CD4-positive, alpha-beta T cell (primary cell): ENCODE measurements at regions of chr6 and their contacts with region 1.

Region 1: GRCh38 chr6:166999145-166999883 is at the start of gene CEP43:
- DNase-seq: peak; percentile 65 to 93 (median 83)
- ATAC-seq: peak; percentile 87
- H3K4me3 ChIP-seq: peak within 1 kb of the TSS; percentile 98
- H3K4me3 Mint-ChIP-seq: peak within 1 kb of the TSS; percentile 96
- H3K27ac ChIP-seq: peak within 1 kb of the TSS; percentile 14 to 61
- H3K27ac Mint-ChIP-seq: peak within 1 kb of the TSS; percentile 87
- H3K4me1 ChIP-seq: peaks cover 15% of the 10 kb centered on the region
- H3K4me1 Mint-ChIP-seq: peaks cover 29% of the 10 kb centered on the region
- H3K27me3 ChIP-seq: no peaks in the 10 kb centered on the region
- H3K27me3 Mint-ChIP-seq: no peaks in the 10 kb centered on the region
- CTCF ChIP-seq: no peak
- total RNA-seq, gene CEP43: 12.5 to 13.5 TPM

Region 2: GRCh38 chr6:166382933-166383801 is 616.1 kb before region 1 on chr6 and contains the start of gene MPC1:
- CTCF ChIA-PET with region 1: no interaction called
- POLR2A ChIA-PET with region 1: no interaction called
- intact Hi-C with region 1: loop called in 1 of 2 experiments (anchors 5 kb)
- DNase-seq: peak; percentile 82 to 97 (median 92)
- ATAC-seq: peak; percentile 92
- H3K4me3 ChIP-seq: peak within 1 kb of the TSS; percentile 66
- H3K4me3 Mint-ChIP-seq: peak within 1 kb of the TSS; percentile 98
- H3K27ac ChIP-seq: peak within 1 kb of the TSS; percentile 72 to 73
- H3K27ac Mint-ChIP-seq: peak within 1 kb of the TSS; percentile 94
- H3K4me1 ChIP-seq: peaks cover 16% of the 10 kb centered on the region
- H3K4me1 Mint-ChIP-seq: peaks cover 14% of the 10 kb centered on the region
- H3K27me3 ChIP-seq: no peaks in the 10 kb centered on the region
- H3K27me3 Mint-ChIP-seq: no peaks in the 10 kb centered on the region
- CTCF ChIP-seq: no peak
- total RNA-seq, gene MPC1: 17.4 to 19.3 TPM

Region 3: DNA sequence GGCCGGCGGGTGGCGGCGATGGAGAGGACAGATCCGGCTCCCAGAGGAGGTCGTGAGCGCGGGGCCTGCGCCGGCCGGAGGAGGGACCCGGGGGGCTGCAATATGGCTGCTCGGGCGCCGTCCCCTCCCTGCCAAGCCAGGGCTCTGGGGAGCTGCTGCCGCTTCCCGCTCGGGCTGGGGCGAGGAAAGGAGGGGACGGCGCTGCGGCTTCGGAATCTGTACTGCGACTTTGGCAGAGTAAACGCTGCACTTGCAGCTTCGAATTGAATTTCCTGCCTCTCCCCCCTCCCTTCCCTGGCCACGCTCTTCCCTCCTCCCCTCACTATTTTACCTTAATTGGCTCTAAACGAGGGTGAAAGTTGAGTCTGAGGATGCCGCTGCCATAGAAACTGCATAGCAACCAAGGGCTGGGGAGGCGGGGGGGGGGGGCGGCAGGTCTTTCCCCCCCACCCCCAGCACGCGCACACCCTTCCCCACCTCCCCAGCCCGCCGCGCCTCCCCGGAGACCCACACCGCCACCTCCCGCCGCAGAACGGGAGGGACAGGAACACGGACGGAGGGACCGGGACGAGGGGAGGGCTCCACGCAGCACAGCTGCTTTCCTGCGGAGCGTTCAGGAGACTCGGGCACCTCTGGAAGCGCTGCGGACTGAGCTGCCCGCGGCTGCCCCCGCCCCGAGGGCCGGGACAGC is 136.9 kb before region 1 on chr6:
- CTCF ChIA-PET with region 1: no interaction called
- POLR2A ChIA-PET with region 1: no interaction called
- intact Hi-C with region 1: loop called in 1 of 2 experiments (anchors 10 kb)
- DNase-seq: peak; percentile 13 to 80 (median 34)
- ATAC-seq: peak; percentile 87
- H3K4me3 ChIP-seq: peak overlapping the region; percentile 63
- H3K4me3 Mint-ChIP-seq: peak overlapping the region; percentile 94
- H3K27ac ChIP-seq: no peak overlapping the region
- H3K27ac Mint-ChIP-seq: peak overlapping the region; percentile 58
- H3K4me1 ChIP-seq: peaks cover 17% of the 10 kb centered on the region
- H3K4me1 Mint-ChIP-seq: peaks cover 17% of the 10 kb centered on the region
- H3K27me3 ChIP-seq: peaks cover 0 to 3% of the 10 kb centered on the region in 2 experiments
- H3K27me3 Mint-ChIP-seq: no peaks in the 10 kb centered on the region
- CTCF ChIP-seq: peak; percentile 28

Region 4: DNA sequence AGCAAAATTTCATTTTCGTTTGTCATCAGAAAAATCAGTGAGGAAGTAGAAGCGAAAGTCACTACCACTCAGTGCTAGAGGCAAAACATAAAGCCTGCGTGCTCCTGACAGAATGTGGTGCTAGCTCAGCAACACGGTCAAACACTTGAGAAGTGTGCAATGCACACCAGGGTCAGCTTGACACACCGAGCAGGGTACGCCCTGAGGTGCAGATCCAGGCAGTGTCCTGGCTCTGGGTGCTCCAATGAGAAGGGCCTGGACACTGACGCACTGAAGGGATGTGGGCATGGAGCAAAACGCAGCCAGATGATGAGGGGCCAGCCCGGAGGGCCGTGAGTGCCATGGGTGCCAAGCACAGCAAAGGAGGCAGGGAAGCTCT is 48.9 kb before region 1 on chr6:
- CTCF ChIA-PET with region 1: interaction called, 3 read pairs
- POLR2A ChIA-PET with region 1: interaction called, 26 read pairs
- intact Hi-C with region 1: loop called in 1 of 2 experiments (anchors 5 kb)
- DNase-seq: peak in 4 of 14 experiments; percentile 39 to 72 (median 61)
- ATAC-seq: peak; percentile 14
- H3K4me3 ChIP-seq: peak overlapping the region; percentile 34
- H3K4me3 Mint-ChIP-seq: peak overlapping the region; percentile 72
- H3K27ac ChIP-seq: peak overlapping the region; percentile 79 to 88
- H3K27ac Mint-ChIP-seq: peak overlapping the region; percentile 93
- H3K4me1 ChIP-seq: peaks cover 86% of the 10 kb centered on the region
- H3K4me1 Mint-ChIP-seq: peaks cover 63% of the 10 kb centered on the region
- H3K27me3 ChIP-seq: no peaks in the 10 kb centered on the region
- H3K27me3 Mint-ChIP-seq: no peaks in the 10 kb centered on the region
- CTCF ChIP-seq: no peak

Region 5: DNA sequence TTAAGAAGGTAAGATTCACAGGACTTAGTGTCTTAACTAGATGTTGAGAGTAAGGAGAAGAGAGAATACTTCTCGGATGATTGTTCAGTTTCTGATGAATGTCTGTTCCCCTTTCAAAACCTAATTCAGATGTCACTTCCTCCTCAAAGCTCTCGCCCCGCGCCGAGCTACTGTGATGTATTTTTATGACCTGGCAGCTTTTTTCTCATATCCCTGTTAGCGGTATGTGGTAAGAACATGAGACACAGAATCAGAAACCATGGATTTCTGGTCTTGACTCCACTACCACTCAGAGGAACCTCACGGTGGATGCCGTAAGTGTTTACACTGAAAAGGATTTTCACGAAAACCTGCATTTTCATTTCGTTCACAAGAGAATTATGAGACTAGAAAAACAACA is 48.2 kb after region 1 on chr6:
- CTCF ChIA-PET with region 1: interaction called, 6 read pairs
- POLR2A ChIA-PET with region 1: interaction called, 4 read pairs
- intact Hi-C with region 1: loop called (anchors 5 to 10 kb)
- DNase-seq: peak in 13 of 14 experiments; percentile 23 to 79 (median 43)
- ATAC-seq: peak; percentile 91
- H3K4me3 ChIP-seq: peak overlapping the region; percentile 29
- H3K4me3 Mint-ChIP-seq: peak overlapping the region; percentile 40
- H3K27ac ChIP-seq: peak overlapping the region in 1 of 2 donors; percentile 63
- H3K27ac Mint-ChIP-seq: peak overlapping the region; percentile 78
- H3K4me1 ChIP-seq: peaks cover 30% of the 10 kb centered on the region
- H3K4me1 Mint-ChIP-seq: peaks cover 53% of the 10 kb centered on the region
- H3K27me3 ChIP-seq: no peaks in the 10 kb centered on the region
- H3K27me3 Mint-ChIP-seq: no peaks in the 10 kb centered on the region
- CTCF ChIP-seq: no peak

Region 6: DNA sequence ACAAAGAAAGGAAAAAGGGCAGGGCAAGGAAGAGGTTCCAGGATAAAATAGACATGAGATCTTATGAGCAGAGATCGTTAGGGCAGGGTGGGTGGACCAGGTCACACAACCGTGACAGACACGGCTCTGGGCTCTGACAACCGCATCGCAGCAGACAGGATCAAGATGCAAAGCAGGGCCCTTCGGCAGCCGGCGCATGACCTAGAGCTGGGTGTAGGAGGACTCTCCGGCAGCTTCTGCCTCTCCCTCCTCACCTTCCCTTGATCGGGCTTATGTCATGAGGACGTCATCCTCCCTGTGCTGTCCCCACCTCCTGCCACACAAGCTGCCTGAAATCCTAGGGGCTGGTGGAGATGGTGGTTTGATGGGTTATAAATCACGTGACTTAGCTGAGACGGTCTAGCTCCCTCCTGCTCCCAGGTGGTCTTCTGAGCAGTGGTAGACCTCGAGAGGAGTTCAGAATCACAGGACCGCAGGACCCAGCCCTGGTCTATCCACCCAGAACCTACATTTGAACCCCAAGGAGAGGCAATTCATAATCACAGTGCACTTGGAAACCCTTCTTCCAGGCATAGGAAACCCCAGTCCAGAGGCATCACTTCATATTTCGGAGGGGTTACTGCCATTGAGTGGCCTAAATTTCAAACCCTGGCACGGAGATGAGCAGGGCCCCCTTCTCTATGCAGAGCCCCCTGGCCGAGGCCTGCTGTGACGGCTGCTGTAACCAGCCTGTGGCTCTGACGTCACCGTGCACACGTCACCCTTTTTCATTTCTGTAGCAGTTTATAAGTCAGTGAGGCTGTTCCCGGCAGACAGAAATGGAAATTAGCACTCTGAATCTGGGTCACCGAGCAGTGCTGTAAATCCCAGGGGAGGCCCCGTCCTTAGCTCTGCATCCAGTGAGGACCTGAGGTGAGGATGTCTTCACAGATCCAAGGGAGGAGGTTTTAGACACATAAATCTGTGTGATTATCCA is 114.9 kb after region 1 on chr6:
- CTCF ChIA-PET with region 1: interaction called, 4 read pairs
- POLR2A ChIA-PET with region 1: interaction called, 4 read pairs
- intact Hi-C with region 1: loop called in 1 of 2 experiments (anchors 5 kb)
- DNase-seq: peak in 11 of 14 experiments; percentile 30 to 90 (median 53)
- ATAC-seq: peak; percentile 79
- H3K4me3 ChIP-seq: peak overlapping the region; percentile 55
- H3K4me3 Mint-ChIP-seq: peak overlapping the region; percentile 97
- H3K27ac ChIP-seq: peak overlapping the region; percentile 58 to 82
- H3K27ac Mint-ChIP-seq: peak overlapping the region; percentile 95
- H3K4me1 ChIP-seq: peaks cover 68% of the 10 kb centered on the region
- H3K4me1 Mint-ChIP-seq: peaks cover 58% of the 10 kb centered on the region
- H3K27me3 ChIP-seq: no peaks in the 10 kb centered on the region
- H3K27me3 Mint-ChIP-seq: no peaks in the 10 kb centered on the region
- CTCF ChIP-seq: no peak

Region 7: DNA sequence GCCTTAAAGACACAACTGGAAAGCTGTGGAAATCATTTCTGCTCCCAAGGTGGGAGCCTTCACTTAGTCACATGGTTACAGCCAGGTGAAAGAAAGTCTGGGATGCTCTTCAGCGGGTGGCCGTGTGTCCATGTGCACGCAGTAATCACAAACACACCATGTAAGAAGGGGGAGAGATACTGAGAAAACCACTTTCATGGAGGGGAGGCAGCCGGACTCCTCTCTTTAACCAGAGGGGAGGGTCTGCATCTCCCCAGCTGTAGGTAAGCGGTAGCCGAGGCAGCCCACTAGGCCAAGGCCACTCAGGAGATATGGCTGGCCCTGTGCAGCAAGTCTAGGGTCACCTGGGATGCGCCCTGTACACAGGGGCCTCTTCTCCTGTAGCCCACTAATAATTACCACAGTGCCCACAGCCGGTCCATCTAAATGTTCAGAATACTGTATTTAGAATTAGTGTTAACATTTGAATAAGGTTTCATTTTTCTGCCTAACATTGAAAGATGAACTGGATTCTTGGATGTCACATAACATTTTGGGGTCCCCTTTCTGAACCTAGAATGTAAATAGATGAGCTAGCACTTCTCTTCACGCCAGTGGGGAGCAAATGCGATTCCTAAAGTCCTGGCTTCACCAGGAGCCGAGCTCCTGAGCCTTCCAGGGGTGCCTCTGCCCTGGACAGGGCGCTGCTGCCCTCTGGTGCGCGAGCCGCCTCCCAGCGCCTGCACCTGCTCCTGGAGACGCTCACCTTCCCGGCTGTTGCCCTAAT is 142.5 kb after region 1 on chr6:
- CTCF ChIA-PET with region 1: no interaction called
- POLR2A ChIA-PET with region 1: interaction called, 6 read pairs
- intact Hi-C with region 1: loop called (anchors 2 kb)
- DNase-seq: peak; percentile 14 to 79 (median 54)
- ATAC-seq: peak; percentile 84
- H3K4me3 ChIP-seq: no peak overlapping the region
- H3K4me3 Mint-ChIP-seq: no peak overlapping the region
- H3K27ac ChIP-seq: no peak overlapping the region
- H3K27ac Mint-ChIP-seq: peak overlapping the region; percentile 12
- H3K4me1 ChIP-seq: peaks cover 19% of the 10 kb centered on the region
- H3K4me1 Mint-ChIP-seq: peaks cover 41% of the 10 kb centered on the region
- H3K27me3 ChIP-seq: no peaks in the 10 kb centered on the region
- H3K27me3 Mint-ChIP-seq: peaks cover 6% of the 10 kb centered on the region
- CTCF ChIP-seq: peak; percentile 90

Region 8: GRCh38 chr6:168979254-168979653 is 1979.9 kb after region 1 on chr6:
- CTCF ChIA-PET with region 1: no interaction called
- POLR2A ChIA-PET with region 1: no interaction called
- intact Hi-C with region 1: no loop called
- DNase-seq: no peak
- ATAC-seq: no peak
- H3K4me3 ChIP-seq: no peak overlapping the region
- H3K4me3 Mint-ChIP-seq: no peak overlapping the region
- H3K27ac ChIP-seq: no peak overlapping the region
- H3K27ac Mint-ChIP-seq: no peak overlapping the region
- H3K4me1 ChIP-seq: no peaks in the 10 kb centered on the region
- H3K4me1 Mint-ChIP-seq: no peaks in the 10 kb centered on the region
- H3K27me3 ChIP-seq: no peaks in the 10 kb centered on the region
- H3K27me3 Mint-ChIP-seq: peaks cover 12% of the 10 kb centered on the region
- CTCF ChIP-seq: no peak